ENCODE measurements at regions of chr5 and their contacts with region 1.

Region 1: DNA sequence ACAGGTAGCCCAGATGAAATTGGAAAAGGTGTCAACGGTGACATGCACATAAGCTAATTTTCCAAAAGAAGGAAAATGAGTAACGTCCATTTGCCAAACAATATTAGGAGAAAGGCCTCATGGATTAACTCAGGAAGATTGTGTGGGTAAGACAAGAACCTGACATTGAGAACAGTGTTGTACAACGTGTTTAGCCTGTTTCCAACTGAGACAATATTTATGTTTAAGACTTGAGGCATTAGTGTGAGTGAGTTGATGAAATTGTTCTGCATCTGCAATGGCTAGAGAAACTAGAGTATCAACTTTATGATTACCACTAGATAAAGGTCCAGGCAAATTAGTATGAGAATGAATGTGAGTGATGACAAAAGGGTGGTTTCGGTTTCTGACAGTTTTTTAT is 191.3 kb upstream of the RAI14 start:
- DNase-seq: no peak
- ATAC-seq: no peak
- H3K4me3 ChIP-seq: no peak overlapping the region
- H3K4me3 Mint-ChIP-seq: no peak overlapping the region
- H3K27ac ChIP-seq: no peak overlapping the region
- H3K27ac Mint-ChIP-seq: no peak overlapping the region
- H3K4me1 ChIP-seq: no peaks in the 10 kb centered on the region
- H3K4me1 Mint-ChIP-seq: peaks cover 0 to 16% (median 0%) of the 10 kb centered on the region in 7 donors
- H3K27me3 ChIP-seq: no peaks in the 10 kb centered on the region
- H3K27me3 Mint-ChIP-seq: peaks cover 0 to 34% (median 8%) of the 10 kb centered on the region in 5 donors

Region 2: GRCh38 chr5:33059081-33059480 is 1405.7 kb before region 1 on chr5:
- CTCF ChIA-PET with region 1: no interaction called
- POLR2A ChIA-PET with region 1: no interaction called
- intact Hi-C with region 1: no loop called
- DNase-seq: no peak
- ATAC-seq: no peak
- H3K4me3 ChIP-seq: no peak overlapping the region
- H3K4me3 Mint-ChIP-seq: no peak overlapping the region
- H3K27ac ChIP-seq: no peak overlapping the region
- H3K27ac Mint-ChIP-seq: no peak overlapping the region
- H3K4me1 ChIP-seq: no peaks in the 10 kb centered on the region
- H3K4me1 Mint-ChIP-seq: no peaks in the 10 kb centered on the region
- H3K27me3 ChIP-seq: no peaks in the 10 kb centered on the region
- H3K27me3 Mint-ChIP-seq: no peaks in the 10 kb centered on the region

Region 3: DNA sequence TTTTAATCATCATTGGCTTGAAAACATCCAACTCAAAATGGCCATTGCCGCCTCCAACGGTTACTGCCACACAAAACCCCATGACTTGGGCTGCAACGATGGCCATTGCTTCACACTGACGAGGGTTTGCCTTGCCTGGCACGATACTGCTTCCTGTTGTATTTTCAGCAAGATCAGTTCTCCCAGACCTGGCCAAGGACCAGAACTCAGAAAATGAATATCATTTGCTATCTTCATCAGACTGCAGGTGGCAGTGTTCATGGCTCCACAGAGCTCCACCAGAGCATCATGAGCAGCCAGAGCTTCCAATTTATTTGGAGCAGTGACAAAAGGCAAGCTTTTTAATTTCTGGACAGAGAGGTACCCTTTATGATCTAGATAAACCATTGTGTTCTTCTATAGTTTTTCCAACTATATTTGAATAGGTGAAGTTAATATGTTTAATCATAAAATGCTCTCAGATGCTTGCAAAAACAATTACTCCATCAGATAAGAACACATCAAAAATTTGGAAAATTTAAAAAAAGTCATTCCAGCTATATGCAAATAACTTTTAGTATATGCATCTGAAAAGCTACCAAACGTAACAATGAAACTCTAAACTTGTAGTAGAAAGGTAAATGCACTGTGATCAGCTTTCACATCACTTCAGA is 467.4 kb before region 1 on chr5:
- CTCF ChIA-PET with region 1: interaction called, 18 read pairs
- POLR2A ChIA-PET with region 1: no interaction called
- intact Hi-C with region 1: loop called (anchors 1 kb)
- DNase-seq: peak in 7 of 9 donors; percentile 20 to 43 (median 40)
- ATAC-seq: peak; percentile 70
- H3K4me3 ChIP-seq: no peak overlapping the region
- H3K4me3 Mint-ChIP-seq: no peak overlapping the region
- H3K27ac ChIP-seq: no peak overlapping the region
- H3K27ac Mint-ChIP-seq: peak overlapping the region in 6 of 9 donors; percentile 4 to 84 (median 46)
- H3K4me1 ChIP-seq: no peaks in the 10 kb centered on the region
- H3K4me1 Mint-ChIP-seq: peaks cover 4 to 42% (median 6%) of the 10 kb centered on the region in 7 donors
- H3K27me3 ChIP-seq: no peaks in the 10 kb centered on the region
- H3K27me3 Mint-ChIP-seq: no peaks in the 10 kb centered on the region

Region 4: GRCh38 chr5:34709861-34710673 is 245.2 kb after region 1 on chr5:
- CTCF ChIA-PET with region 1: no interaction called
- POLR2A ChIA-PET with region 1: no interaction called
- intact Hi-C with region 1: no loop called
- DNase-seq: no peak
- ATAC-seq: no peak
- H3K4me3 ChIP-seq: no peak overlapping the region
- H3K4me3 Mint-ChIP-seq: no peak overlapping the region
- H3K27ac ChIP-seq: no peak overlapping the region
- H3K27ac Mint-ChIP-seq: no peak overlapping the region
- H3K4me1 ChIP-seq: no peaks in the 10 kb centered on the region
- H3K4me1 Mint-ChIP-seq: no peaks in the 10 kb centered on the region
- H3K27me3 ChIP-seq: no peaks in the 10 kb centered on the region
- H3K27me3 Mint-ChIP-seq: peaks cover 0 to 8% (median 6%) of the 10 kb centered on the region in 5 donors